ENCODE measurements at regions of chr12 and their contacts with region 1.

Region 1: DNA sequence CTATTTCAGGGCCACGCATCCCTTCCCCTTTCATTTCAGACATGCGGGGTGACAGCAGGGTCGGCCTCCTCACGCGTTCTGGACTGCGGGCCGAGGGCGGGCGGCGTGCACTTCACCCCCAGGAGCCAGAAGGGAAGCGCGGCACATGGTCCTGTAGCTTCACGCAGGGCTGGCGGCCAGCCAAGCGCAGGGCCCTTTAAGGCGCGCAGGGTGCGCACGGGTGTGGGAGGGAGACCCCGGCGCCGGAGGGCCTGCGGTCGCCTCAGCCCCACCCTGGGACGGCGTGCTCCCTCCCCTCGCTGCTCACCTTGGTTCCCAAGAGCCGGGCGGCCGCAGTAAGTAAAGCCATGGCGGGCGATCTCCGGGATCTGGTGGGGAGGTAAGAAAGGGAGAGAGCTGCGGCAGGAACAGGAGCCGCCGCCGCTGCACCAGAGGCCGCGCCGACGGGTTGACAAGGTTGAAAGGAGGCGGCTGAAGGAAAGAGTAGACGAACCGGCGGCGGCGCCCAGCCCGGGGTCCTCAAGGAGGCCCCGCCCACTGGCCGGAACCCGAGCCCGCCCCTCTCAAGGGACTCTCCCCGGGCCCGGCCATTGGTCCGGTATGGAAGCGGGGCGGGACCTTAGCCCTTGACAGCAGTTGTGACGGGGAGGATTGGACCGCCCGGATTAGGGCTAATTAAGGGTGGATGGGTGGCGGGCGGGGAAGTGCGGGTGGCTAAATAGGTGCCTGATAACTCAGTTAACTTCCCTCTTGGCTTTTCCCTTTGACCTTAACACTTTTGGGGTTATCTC is at the start of gene CS:
- DNase-seq: peak; percentile 98
- ATAC-seq: peak; percentile 96
- H3K4me3 ChIP-seq: peak within 1 kb of the TSS; percentile 78 to 91 (median 83)
- H3K4me3 Mint-ChIP-seq: peak within 1 kb of the TSS; percentile 98
- H3K27ac ChIP-seq: peak within 1 kb of the TSS; percentile 92 to 95
- H3K27ac Mint-ChIP-seq: peak within 1 kb of the TSS; percentile 97
- H3K4me1 ChIP-seq: peaks cover 51 to 61% of the 10 kb centered on the region in 2 donors
- H3K4me1 Mint-ChIP-seq: peaks cover 57% of the 10 kb centered on the region
- H3K27me3 ChIP-seq: no peaks in the 10 kb centered on the region
- H3K27me3 Mint-ChIP-seq: no peaks in the 10 kb centered on the region
- CTCF ChIP-seq: no peak
- total RNA-seq, gene CS: 151 and 154 TPM in 2 replicates

Region 2: DNA sequence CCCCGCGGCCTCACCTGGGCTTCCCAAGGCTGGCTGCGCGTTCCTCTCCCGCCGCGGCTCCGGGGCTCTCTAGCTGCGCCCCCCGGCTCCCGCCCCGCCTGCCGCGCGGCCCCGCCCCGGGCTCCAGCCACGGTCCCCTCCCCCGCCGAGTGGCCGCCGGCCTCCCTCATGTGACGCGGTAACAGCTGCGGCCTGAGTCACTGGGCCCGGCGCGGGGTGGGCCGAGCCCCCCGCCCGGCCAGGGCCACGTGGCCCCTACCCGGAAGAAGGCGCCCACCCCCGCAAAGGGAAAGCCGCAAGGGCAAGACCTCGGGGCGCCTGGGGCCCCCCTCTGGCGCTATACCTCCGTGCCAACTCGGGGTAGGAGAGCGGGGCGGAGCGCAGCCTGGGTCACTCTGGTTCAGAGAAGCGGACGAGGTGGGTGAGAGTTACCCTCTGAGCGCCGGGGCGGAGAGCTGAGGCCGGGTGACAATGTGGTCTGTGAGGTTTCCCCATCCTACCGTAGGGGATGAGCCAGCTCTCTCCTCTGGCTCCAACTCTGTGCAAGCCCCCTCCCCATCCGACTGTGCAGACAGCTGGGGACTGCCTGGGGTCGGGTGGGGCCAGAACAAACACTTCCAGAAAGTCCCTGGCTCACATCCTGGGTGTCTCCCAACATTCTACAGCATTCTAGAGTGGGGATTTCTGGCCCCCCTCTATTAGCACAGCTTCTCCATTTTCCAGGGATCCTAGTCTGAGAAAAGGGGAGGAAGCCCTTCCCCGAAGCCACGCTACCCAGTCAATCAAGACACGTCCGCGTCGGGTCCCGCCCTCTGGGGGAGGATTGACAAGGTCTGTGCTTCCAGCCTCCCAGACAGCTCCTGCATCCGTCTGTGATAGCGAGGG is 570.9 kb before region 1 on chr12 and contains the start of gene CD63:
- CTCF ChIA-PET with region 1: no interaction called
- POLR2A ChIA-PET with region 1: interaction called, 11 read pairs
- intact Hi-C with region 1: no loop called
- DNase-seq: peak; percentile 71
- ATAC-seq: peak; percentile 67
- H3K4me3 ChIP-seq: peak within 1 kb of the TSS; percentile 55 to 91 (median 77)
- H3K4me3 Mint-ChIP-seq: peak within 1 kb of the TSS; percentile 88
- H3K27ac ChIP-seq: peak within 1 kb of the TSS; percentile 64 to 80
- H3K27ac Mint-ChIP-seq: peak within 1 kb of the TSS; percentile 92
- H3K4me1 ChIP-seq: peaks cover 21 to 36% of the 10 kb centered on the region in 2 donors
- H3K4me1 Mint-ChIP-seq: peaks cover 41% of the 10 kb centered on the region
- H3K27me3 ChIP-seq: no peaks in the 10 kb centered on the region
- H3K27me3 Mint-ChIP-seq: no peaks in the 10 kb centered on the region
- CTCF ChIP-seq: no peak
- total RNA-seq, gene CD63: 104 TPM in 2 replicates

Region 3: GRCh38 chr12:55771736-55772135 is 528.3 kb before region 1 on chr12:
- CTCF ChIA-PET with region 1: no interaction called
- POLR2A ChIA-PET with region 1: no interaction called
- intact Hi-C with region 1: no loop called
- DNase-seq: no peak
- ATAC-seq: no peak
- H3K4me3 ChIP-seq: no peak overlapping the region
- H3K4me3 Mint-ChIP-seq: no peak overlapping the region
- H3K27ac ChIP-seq: no peak overlapping the region
- H3K27ac Mint-ChIP-seq: no peak overlapping the region
- H3K4me1 ChIP-seq: no peaks in the 10 kb centered on the region
- H3K4me1 Mint-ChIP-seq: no peaks in the 10 kb centered on the region
- H3K27me3 ChIP-seq: no peaks in the 10 kb centered on the region
- H3K27me3 Mint-ChIP-seq: no peaks in the 10 kb centered on the region
- CTCF ChIP-seq: no peak

Region 4: DNA sequence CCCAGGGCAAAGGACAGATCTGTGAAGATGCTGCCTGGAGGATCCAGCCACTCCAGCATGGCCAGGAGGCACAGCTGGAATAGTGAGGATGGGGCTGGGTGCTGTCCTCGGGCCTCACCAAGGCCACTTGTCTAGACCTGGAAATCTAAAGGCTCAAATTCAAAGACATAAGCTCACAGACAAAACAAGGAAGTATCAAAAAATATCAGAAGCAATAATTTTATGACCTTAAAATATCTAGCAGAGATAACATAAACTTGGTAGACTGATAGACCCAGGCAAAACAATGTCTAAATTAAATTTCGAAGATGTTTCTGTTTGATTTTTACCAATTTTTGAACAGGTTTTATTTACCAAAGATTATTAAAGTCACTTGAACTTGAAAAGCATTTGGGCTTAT is 434.7 kb before region 1 on chr12:
- CTCF ChIA-PET with region 1: no interaction called
- POLR2A ChIA-PET with region 1: no interaction called
- intact Hi-C with region 1: no loop called
- DNase-seq: no peak
- ATAC-seq: no peak
- H3K4me3 ChIP-seq: no peak overlapping the region
- H3K4me3 Mint-ChIP-seq: no peak overlapping the region
- H3K27ac ChIP-seq: no peak overlapping the region
- H3K27ac Mint-ChIP-seq: no peak overlapping the region
- H3K4me1 ChIP-seq: no peaks in the 10 kb centered on the region
- H3K4me1 Mint-ChIP-seq: no peaks in the 10 kb centered on the region
- H3K27me3 ChIP-seq: no peaks in the 10 kb centered on the region
- H3K27me3 Mint-ChIP-seq: no peaks in the 10 kb centered on the region
- CTCF ChIP-seq: no peak

Region 5: DNA sequence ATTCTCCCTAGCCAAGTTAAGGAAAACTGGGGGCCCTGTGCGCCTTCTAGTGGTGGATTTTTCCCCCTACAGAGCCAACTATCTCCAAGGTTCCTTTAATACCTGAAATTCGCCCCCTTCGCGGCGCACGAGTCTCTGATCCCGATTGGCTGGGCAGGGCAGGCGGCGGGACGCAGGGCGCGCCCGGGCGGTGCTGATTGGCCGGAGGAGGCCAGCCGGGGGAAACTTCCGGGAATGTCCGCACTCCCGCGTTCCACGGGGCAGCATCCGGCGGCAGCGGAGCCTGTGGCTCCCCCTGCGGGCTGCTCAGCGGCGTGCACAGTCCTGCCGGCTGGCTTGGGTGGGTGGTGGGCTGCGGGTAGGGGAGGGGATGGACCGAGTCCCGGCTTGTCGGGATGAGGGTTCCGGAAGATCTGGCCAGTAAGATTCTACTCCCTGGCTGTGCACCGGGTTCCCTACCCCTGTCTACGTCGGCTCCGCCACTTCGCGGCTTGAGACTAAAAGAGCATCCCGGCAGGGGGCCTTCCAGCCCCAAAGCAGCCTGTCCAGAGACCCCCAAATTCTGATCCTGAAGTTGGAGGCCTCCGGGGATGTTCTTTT is 75.8 kb before region 1 on chr12 and contains the start of gene NABP2:
- CTCF ChIA-PET with region 1: interaction called, 3 read pairs
- POLR2A ChIA-PET with region 1: interaction called, 3 read pairs
- intact Hi-C with region 1: loop called (anchors 1 kb)
- DNase-seq: peak; percentile 94
- ATAC-seq: peak; percentile 72
- H3K4me3 ChIP-seq: peak within 1 kb of the TSS; percentile 41 to 71 (median 62)
- H3K4me3 Mint-ChIP-seq: peak within 1 kb of the TSS; percentile 100
- H3K27ac ChIP-seq: peak within 1 kb of the TSS; percentile 53 to 79
- H3K27ac Mint-ChIP-seq: peak within 1 kb of the TSS; percentile 87
- H3K4me1 ChIP-seq: peaks cover 26 to 48% of the 10 kb centered on the region in 2 donors
- H3K4me1 Mint-ChIP-seq: peaks cover 47% of the 10 kb centered on the region
- H3K27me3 ChIP-seq: no peaks in the 10 kb centered on the region
- H3K27me3 Mint-ChIP-seq: no peaks in the 10 kb centered on the region
- CTCF ChIP-seq: peak; percentile 93
- total RNA-seq, gene NABP2: 12.4 and 14.9 TPM in 2 replicates

Region 6: GRCh38 chr12:56258057-56258819 is 41.8 kb before region 1 on chr12 and contains the start of gene ANKRD52:
- CTCF ChIA-PET with region 1: interaction called, 3 read pairs
- POLR2A ChIA-PET with region 1: interaction called, 3 read pairs
- intact Hi-C with region 1: loop called (anchors 2 kb)
- DNase-seq: peak; percentile 93
- ATAC-seq: peak; percentile 95
- H3K4me3 ChIP-seq: peak within 1 kb of the TSS; percentile 32 to 99 (median 77)
- H3K4me3 Mint-ChIP-seq: peak within 1 kb of the TSS; percentile 90
- H3K27ac ChIP-seq: peak within 1 kb of the TSS; percentile 60 to 81
- H3K27ac Mint-ChIP-seq: peak within 1 kb of the TSS; percentile 92
- H3K4me1 ChIP-seq: peaks cover 16 to 21% of the 10 kb centered on the region in 2 donors
- H3K4me1 Mint-ChIP-seq: peaks cover 18% of the 10 kb centered on the region
- H3K27me3 ChIP-seq: no peaks in the 10 kb centered on the region
- H3K27me3 Mint-ChIP-seq: no peaks in the 10 kb centered on the region
- CTCF ChIP-seq: peak; percentile 78
- total RNA-seq, gene ANKRD52: 46.5 and 54.6 TPM in 2 replicates

Region 7: GRCh38 chr12:56266693-56267442 is 33.2 kb before region 1 on chr12 and contains the start of gene COQ10A:
- CTCF ChIA-PET with region 1: interaction called, 3 read pairs
- POLR2A ChIA-PET with region 1: interaction called, 3 read pairs
- intact Hi-C with region 1: loop called (anchors 1 kb)
- DNase-seq: peak; percentile 94
- ATAC-seq: peak; percentile 89
- H3K4me3 ChIP-seq: peak within 1 kb of the TSS; percentile 65 to 86 (median 75)
- H3K4me3 Mint-ChIP-seq: peak within 1 kb of the TSS; percentile 91
- H3K27ac ChIP-seq: peak within 1 kb of the TSS; percentile 94
- H3K27ac Mint-ChIP-seq: peak within 1 kb of the TSS; percentile 95
- H3K4me1 ChIP-seq: peaks cover 10 to 15% of the 10 kb centered on the region in 2 donors
- H3K4me1 Mint-ChIP-seq: peaks cover 20% of the 10 kb centered on the region
- H3K27me3 ChIP-seq: no peaks in the 10 kb centered on the region
- H3K27me3 Mint-ChIP-seq: no peaks in the 10 kb centered on the region
- CTCF ChIP-seq: peak; percentile 72
- total RNA-seq, gene COQ10A: 73.5 and 76.3 TPM in 2 replicates

Region 8: GRCh38 chr12:56315622-56316473 is 15.8 kb after region 1 on chr12 and contains the start of gene CNPY2:
- CTCF ChIA-PET with region 1: no interaction called
- POLR2A ChIA-PET with region 1: interaction called, 3 read pairs
- intact Hi-C with region 1: loop called (anchors 1 kb)
- DNase-seq: peak; percentile 99
- ATAC-seq: peak; percentile 86
- H3K4me3 ChIP-seq: peak within 1 kb of the TSS; percentile 78 to 94 (median 91)
- H3K4me3 Mint-ChIP-seq: peak within 1 kb of the TSS; percentile 99
- H3K27ac ChIP-seq: peak within 1 kb of the TSS; percentile 67 to 90
- H3K27ac Mint-ChIP-seq: peak within 1 kb of the TSS; percentile 99
- H3K4me1 ChIP-seq: peaks cover 12 to 15% of the 10 kb centered on the region in 2 donors
- H3K4me1 Mint-ChIP-seq: peaks cover 10% of the 10 kb centered on the region
- H3K27me3 ChIP-seq: no peaks in the 10 kb centered on the region
- H3K27me3 Mint-ChIP-seq: no peaks in the 10 kb centered on the region
- CTCF ChIP-seq: no peak
- total RNA-seq, gene CNPY2: 89.0 and 91.2 TPM in 2 replicates

Region 9: GRCh38 chr12:56333679-56334489 is 33.8 kb after region 1 on chr12 and contains the start of gene PAN2:
- CTCF ChIA-PET with region 1: interaction called, 5 read pairs
- POLR2A ChIA-PET with region 1: interaction called, 4 read pairs
- intact Hi-C with region 1: loop called (anchors 1 kb)
- DNase-seq: peak; percentile 98
- ATAC-seq: peak; percentile 90
- H3K4me3 ChIP-seq: peak within 1 kb of the TSS; percentile 63 to 88 (median 80)
- H3K4me3 Mint-ChIP-seq: peak within 1 kb of the TSS; percentile 99
- H3K27ac ChIP-seq: peak within 1 kb of the TSS; percentile 94 to 100
- H3K27ac Mint-ChIP-seq: peak within 1 kb of the TSS; percentile 100
- H3K4me1 ChIP-seq: peaks cover 35 to 44% of the 10 kb centered on the region in 2 donors
- H3K4me1 Mint-ChIP-seq: peaks cover 52% of the 10 kb centered on the region
- H3K27me3 ChIP-seq: no peaks in the 10 kb centered on the region
- H3K27me3 Mint-ChIP-seq: no peaks in the 10 kb centered on the region
- CTCF ChIP-seq: peak; percentile 65
- total RNA-seq, gene PAN2: 216 and 230 TPM in 2 replicates

Region 10: GRCh38 chr12:56510786-56511185 is 210.7 kb after region 1 on chr12:
- CTCF ChIA-PET with region 1: no interaction called
- POLR2A ChIA-PET with region 1: no interaction called
- intact Hi-C with region 1: no loop called
- DNase-seq: no peak
- ATAC-seq: no peak
- H3K4me3 ChIP-seq: no peak overlapping the region
- H3K4me3 Mint-ChIP-seq: no peak overlapping the region
- H3K27ac ChIP-seq: no peak overlapping the region
- H3K27ac Mint-ChIP-seq: no peak overlapping the region
- H3K4me1 ChIP-seq: peaks cover 0 to 2% of the 10 kb centered on the region in 2 donors
- H3K4me1 Mint-ChIP-seq: peaks cover 2% of the 10 kb centered on the region
- H3K27me3 ChIP-seq: no peaks in the 10 kb centered on the region
- H3K27me3 Mint-ChIP-seq: peaks cover 13% of the 10 kb centered on the region
- CTCF ChIP-seq: no peak

Region 11: GRCh38 chr12:56709759-56710376 is 409.8 kb after region 1 on chr12:
- CTCF ChIA-PET with region 1: no interaction called
- POLR2A ChIA-PET with region 1: no interaction called
- intact Hi-C with region 1: no loop called
- DNase-seq: no peak
- ATAC-seq: no peak
- H3K4me3 ChIP-seq: no peak overlapping the region
- H3K4me3 Mint-ChIP-seq: no peak overlapping the region
- H3K27ac ChIP-seq: no peak overlapping the region
- H3K27ac Mint-ChIP-seq: peak overlapping the region; percentile 50
- H3K4me1 ChIP-seq: no peaks in the 10 kb centered on the region
- H3K4me1 Mint-ChIP-seq: no peaks in the 10 kb centered on the region
- H3K27me3 ChIP-seq: no peaks in the 10 kb centered on the region
- H3K27me3 Mint-ChIP-seq: no peaks in the 10 kb centered on the region
- CTCF ChIP-seq: no peak